ENCODE measurements at regions of chr3 and their contacts with region 1.

Region 1: GRCh38 chr3:18559331-18559842 is 134.2 kb upstream of the SATB1 start:
- DNase-seq: peak; percentile 27
- H3K4me3 Mint-ChIP-seq: no peak overlapping the region
- H3K27ac Mint-ChIP-seq: no peak overlapping the region
- H3K4me1 Mint-ChIP-seq: peaks cover 52% of the 10 kb centered on the region
- H3K27me3 Mint-ChIP-seq: no peaks in the 10 kb centered on the region

Region 2: DNA sequence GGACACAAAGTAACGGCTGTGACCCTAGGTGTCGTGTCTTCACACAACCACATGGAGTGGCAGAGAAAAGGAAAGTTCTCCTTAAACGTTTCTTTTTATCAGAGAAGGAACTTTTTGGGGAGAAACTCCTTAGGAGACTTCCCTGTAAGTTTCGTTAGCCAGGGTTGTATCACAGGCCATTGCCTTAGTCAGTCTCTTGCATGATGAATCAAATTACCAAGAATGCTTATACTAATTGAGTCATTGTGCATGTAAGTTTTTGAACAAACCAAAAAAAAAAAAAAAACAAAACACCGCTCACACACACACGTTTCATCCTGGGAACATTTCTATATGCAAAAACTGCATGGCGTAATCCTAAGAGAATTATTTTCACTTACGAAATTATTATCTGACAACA is 16.2 kb after region 1 on chr3:
- CTCF ChIA-PET with region 1: interaction called, 12 read pairs
- DNase-seq: no peak
- H3K4me3 Mint-ChIP-seq: no peak overlapping the region
- H3K27ac Mint-ChIP-seq: no peak overlapping the region
- H3K4me1 Mint-ChIP-seq: no peaks in the 10 kb centered on the region
- H3K27me3 Mint-ChIP-seq: no peaks in the 10 kb centered on the region

Region 3: GRCh38 chr3:18586076-18586475 is 26.7 kb after region 1 on chr3:
- CTCF ChIA-PET with region 1: no interaction called
- DNase-seq: no peak
- H3K4me3 Mint-ChIP-seq: no peak overlapping the region
- H3K27ac Mint-ChIP-seq: no peak overlapping the region
- H3K4me1 Mint-ChIP-seq: no peaks in the 10 kb centered on the region
- H3K27me3 Mint-ChIP-seq: no peaks in the 10 kb centered on the region

Region 4: DNA sequence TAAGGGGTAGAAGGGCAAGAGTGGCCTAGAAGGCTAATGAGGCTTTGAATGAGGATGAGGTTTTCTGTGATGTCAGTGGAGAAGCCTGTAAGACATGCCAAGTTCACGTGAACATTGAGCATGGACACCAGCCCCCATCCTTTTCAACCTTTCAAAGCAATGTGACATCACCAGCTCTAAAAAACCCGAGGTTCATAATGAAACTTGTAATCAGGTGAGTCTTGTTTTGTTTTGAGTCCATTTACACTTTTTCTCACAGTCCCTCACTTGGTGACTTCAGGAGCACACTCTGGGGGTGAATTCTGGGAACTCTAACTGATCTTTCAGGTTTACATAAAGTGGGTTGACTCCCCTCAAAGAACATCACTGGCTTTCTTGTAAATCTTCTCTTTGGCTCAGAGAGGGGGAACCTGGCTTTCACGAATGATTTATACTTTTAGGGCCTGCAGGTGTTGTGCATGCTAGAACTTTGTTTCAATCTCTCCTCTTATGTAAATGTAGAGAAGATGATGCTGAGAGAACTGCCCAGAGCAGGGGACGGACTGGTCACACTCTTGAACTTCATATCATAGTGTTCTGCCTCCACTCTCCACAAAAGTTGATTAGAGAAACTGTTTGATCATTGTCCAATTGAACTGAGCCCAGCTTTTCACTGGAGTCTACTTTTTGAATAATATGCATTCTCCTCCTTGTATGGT is 90.4 kb after region 1 on chr3:
- CTCF ChIA-PET with region 1: interaction called, 16 read pairs
- DNase-seq: peak; percentile 63
- H3K4me3 Mint-ChIP-seq: no peak overlapping the region
- H3K27ac Mint-ChIP-seq: peak overlapping the region; percentile 68
- H3K4me1 Mint-ChIP-seq: peaks cover 50% of the 10 kb centered on the region
- H3K27me3 Mint-ChIP-seq: no peaks in the 10 kb centered on the region

Region 5: GRCh38 chr3:18717598-18717997 is 158.2 kb after region 1 on chr3:
- CTCF ChIA-PET with region 1: interaction called, 31 read pairs
- DNase-seq: no peak
- H3K4me3 Mint-ChIP-seq: peak overlapping the region; percentile 21
- H3K27ac Mint-ChIP-seq: peak overlapping the region; percentile 96
- H3K4me1 Mint-ChIP-seq: peaks cover 69% of the 10 kb centered on the region
- H3K27me3 Mint-ChIP-seq: no peaks in the 10 kb centered on the region

Region 6: DNA sequence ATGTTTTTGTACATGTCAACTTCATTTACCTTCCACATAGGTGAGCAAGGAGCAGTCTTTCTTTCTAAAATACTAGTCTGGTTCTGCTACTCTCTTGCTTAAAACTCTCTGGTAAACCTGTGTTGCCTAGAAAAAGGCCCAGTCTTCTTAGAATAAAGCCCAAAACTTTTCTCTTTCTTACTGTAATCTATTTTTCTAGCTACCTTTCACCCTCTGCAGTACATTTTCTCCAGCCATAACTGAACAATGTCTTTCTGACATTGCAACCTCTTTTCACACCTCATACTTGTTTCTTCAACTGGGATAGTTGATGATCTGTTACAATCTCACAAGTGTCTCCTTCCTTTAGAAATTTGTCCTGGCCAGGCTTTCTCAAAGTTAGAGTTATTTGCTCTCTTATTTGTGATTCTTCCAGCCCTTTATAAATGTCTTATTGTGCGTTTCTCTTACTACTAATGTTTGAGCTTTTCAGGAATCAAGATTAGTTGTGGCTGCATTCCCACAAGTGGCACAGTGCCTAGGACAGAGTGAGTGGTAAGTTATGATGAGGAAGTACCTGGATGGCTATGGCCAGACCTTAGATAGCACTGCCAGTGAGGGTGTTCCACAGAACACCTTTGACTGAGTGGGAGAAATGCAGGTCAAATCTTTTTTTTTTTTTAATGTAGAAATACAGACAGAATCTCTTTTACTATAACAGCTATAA is 179.2 kb after region 1 on chr3:
- CTCF ChIA-PET with region 1: interaction called, 11 read pairs
- DNase-seq: no peak
- H3K4me3 Mint-ChIP-seq: no peak overlapping the region
- H3K27ac Mint-ChIP-seq: peak overlapping the region; percentile 16
- H3K4me1 Mint-ChIP-seq: peaks cover 65% of the 10 kb centered on the region
- H3K27me3 Mint-ChIP-seq: no peaks in the 10 kb centered on the region

Region 7: DNA sequence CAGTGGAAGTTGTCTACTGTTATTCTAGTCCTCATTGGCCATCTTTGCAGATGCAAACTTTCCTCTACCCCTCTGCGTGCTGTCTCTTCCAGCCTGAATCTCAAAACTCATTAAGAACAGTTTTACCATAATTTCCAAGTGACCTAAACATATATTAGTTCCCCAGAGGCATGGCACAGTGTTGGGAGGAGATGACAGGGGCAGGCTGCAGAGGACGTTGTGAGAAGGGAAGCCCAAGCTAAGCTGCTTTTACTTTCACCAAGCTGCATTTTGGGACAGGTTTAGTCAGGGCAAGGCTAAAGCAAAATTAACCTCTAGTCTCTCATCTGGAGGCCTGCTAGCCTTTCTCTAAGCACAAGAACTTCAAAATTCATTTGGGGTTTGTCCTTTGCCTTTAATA is 184.4 kb after region 1 on chr3:
- CTCF ChIA-PET with region 1: interaction called, 11 read pairs
- DNase-seq: peak; percentile 43
- H3K4me3 Mint-ChIP-seq: peak overlapping the region; percentile 20
- H3K27ac Mint-ChIP-seq: peak overlapping the region; percentile 81
- H3K4me1 Mint-ChIP-seq: peaks cover 79% of the 10 kb centered on the region
- H3K27me3 Mint-ChIP-seq: no peaks in the 10 kb centered on the region

Region 8: DNA sequence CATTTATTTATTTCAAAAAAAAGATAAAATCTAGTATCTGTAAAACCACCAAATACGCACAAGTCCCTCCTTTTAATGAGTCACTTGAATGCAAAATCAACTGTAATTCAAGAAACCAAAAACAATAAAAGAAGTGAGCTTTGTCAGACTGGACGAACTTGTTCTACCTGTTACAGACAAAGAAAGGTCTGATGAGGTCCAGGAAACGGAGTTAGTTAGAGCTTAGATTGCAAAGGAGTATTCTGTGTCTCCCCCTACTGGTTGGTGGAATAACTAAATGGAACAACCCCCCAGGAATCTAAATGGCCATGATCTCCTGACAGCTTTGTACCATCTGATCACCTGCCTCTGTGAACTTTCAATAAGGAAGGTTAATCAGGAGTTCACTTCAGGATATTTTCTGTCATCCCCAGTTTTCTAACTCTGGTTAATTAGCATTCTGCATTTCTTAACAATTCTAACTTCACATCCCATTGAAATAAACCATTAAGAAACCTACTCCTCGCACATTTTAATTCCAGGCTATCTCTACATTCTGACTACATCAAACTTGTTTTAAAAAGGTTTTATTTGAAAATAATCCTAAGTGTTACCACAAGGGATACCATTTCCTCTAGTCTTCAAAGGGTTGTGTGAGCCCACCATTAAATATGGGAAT is 198.8 kb after region 1 on chr3:
- CTCF ChIA-PET with region 1: interaction called, 62 read pairs
- DNase-seq: peak; percentile 26
- H3K4me3 Mint-ChIP-seq: no peak overlapping the region
- H3K27ac Mint-ChIP-seq: peak overlapping the region; percentile 6
- H3K4me1 Mint-ChIP-seq: peaks cover 38% of the 10 kb centered on the region
- H3K27me3 Mint-ChIP-seq: no peaks in the 10 kb centered on the region

Measured in activated naive CD4-positive, alpha-beta T cell treated with anti-CD3 and anti-CD28 coated beads, Interleukin-2, amount 10 ng/mL, durations not matched to agents 7 days and 5 days (primary cell).